Head of caudate nucleus (tissue), 42 donors: ENCODE measurements at regions of chr12 and their contacts with region 1.

Region 1: GRCh38 chr12:104877123-104877705 is 80.9 kb downstream of the SLC41A2 start:
- DNase-seq: peak in 39 of 42 donors; percentile 11 to 76 (median 49)

Region 2: DNA sequence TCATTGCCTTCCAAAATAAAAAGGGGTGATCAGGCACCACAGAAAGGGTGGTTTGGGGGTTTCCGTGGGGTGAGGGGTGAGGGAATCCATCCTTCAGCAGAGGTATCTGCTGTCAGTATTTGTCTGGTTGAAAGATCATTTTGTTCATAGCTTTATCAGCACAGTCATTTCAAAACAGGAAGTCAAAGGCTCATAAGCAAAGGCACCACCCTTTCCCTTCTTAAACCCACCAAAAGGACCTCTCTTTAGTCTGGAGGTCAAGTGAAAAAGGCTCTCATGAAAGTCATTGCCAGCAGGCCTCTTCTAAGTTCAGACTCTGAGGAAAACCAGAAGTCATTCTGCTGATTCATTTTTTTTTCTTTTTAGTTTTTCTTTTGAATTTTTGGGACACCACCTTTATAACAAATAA is 414.3 kb before region 1 on chr12:
- intact Hi-C with region 1: loop called (anchors 10 kb)
- DNase-seq: no peak

Region 3: GRCh38 chr12:104779134-104779533 is 98.1 kb before region 1 on chr12:
- intact Hi-C with region 1: no loop called
- DNase-seq: no peak

Region 4: DNA sequence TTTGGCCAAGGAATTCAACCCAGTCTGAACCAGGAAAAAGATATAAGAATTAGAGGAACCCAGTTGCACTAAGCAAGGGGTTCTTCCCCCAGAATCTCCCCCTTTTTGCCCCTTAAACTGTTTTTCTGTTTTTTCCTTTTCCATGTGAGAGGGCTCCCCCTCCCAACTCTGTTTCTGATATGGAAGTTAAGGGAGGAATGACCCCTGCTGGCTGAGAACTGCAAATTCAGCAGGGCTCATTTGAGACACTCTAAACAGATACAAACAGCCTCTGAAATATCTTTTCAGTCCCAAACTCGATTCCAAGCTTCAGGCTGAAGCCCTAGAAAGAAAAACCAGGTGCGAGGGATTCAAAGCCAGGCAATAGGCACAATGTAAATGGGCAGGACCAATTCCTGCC is 51.8 kb before region 1 on chr12:
- intact Hi-C with region 1: no loop called
- DNase-seq: no peak

Region 5: GRCh38 chr12:104910196-104910840 is 33.1 kb after region 1 on chr12:
- intact Hi-C with region 1: no loop called
- DNase-seq: no peak